ENCODE measurements at regions of chr2 and their contacts with region 1.

Region 1: GRCh38 chr2:7467782-7468447 is 550.7 kb downstream of the RNF144A start:
- DNase-seq: peak; percentile 69
- ATAC-seq: peak; percentile 96
- H3K4me3 Mint-ChIP-seq: peak overlapping the region; percentile 15
- H3K27ac Mint-ChIP-seq: peak overlapping the region; percentile 84
- H3K4me1 Mint-ChIP-seq: peaks cover 45% of the 10 kb centered on the region
- H3K27me3 Mint-ChIP-seq: peaks cover 2% of the 10 kb centered on the region

Region 2: GRCh38 chr2:7348761-7349160 is 119.2 kb before region 1 on chr2:
- CTCF ChIA-PET with region 1: no interaction called
- POLR2A ChIA-PET with region 1: no interaction called
- intact Hi-C with region 1: no loop called
- DNase-seq: no peak
- ATAC-seq: no peak
- H3K4me3 Mint-ChIP-seq: no peak overlapping the region
- H3K27ac Mint-ChIP-seq: no peak overlapping the region
- H3K4me1 Mint-ChIP-seq: no peaks in the 10 kb centered on the region
- H3K27me3 Mint-ChIP-seq: no peaks in the 10 kb centered on the region

Region 3: DNA sequence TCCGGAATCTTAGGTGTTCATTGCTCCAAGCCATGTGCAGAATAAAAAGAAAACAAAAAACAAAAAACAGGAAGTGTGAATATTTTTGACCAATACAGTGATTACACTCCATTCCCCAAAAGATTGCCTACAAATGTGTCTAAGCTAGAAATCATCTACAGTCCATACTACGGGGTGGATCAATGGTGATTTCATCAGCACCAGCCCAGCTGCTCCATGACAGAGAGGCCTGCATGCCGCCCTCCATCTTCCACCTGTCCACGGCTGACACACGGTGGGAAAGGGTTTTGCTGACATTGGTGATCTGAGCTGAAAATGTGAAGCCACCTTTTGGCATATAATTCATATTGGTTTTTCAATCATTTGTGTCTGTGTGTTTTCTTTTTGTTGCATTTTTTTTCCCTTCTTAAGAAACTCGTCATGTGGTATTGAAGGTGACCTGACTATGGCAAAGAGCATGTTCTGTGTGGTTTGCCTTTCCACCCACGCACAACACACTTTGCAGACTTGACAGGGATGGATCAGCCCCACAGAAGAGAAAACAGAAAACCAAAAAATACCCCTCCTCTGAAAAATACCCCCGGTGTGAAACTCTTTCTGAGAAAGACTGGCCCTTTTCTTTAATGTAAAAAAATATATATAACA is 17.6 kb before region 1 on chr2:
- CTCF ChIA-PET with region 1: interaction called, 3 read pairs
- POLR2A ChIA-PET with region 1: interaction called, 3 read pairs
- intact Hi-C with region 1: loop called (anchors 1 to 2 kb)
- DNase-seq: peak; percentile 83
- ATAC-seq: peak; percentile 84
- H3K4me3 Mint-ChIP-seq: peak overlapping the region; percentile 36
- H3K27ac Mint-ChIP-seq: peak overlapping the region; percentile 89
- H3K4me1 Mint-ChIP-seq: peaks cover 74% of the 10 kb centered on the region
- H3K27me3 Mint-ChIP-seq: no peaks in the 10 kb centered on the region

Region 4: GRCh38 chr2:7517088-7517487 is 49.2 kb after region 1 on chr2:
- CTCF ChIA-PET with region 1: no interaction called
- POLR2A ChIA-PET with region 1: no interaction called
- intact Hi-C with region 1: loop called in 1 of 2 experiments (anchors 5 kb)
- DNase-seq: peak; percentile 48
- ATAC-seq: peak; percentile 88
- H3K4me3 Mint-ChIP-seq: peak overlapping the region; percentile 18
- H3K27ac Mint-ChIP-seq: peak overlapping the region; percentile 89
- H3K4me1 Mint-ChIP-seq: peaks cover 38% of the 10 kb centered on the region
- H3K27me3 Mint-ChIP-seq: no peaks in the 10 kb centered on the region

Region 5: DNA sequence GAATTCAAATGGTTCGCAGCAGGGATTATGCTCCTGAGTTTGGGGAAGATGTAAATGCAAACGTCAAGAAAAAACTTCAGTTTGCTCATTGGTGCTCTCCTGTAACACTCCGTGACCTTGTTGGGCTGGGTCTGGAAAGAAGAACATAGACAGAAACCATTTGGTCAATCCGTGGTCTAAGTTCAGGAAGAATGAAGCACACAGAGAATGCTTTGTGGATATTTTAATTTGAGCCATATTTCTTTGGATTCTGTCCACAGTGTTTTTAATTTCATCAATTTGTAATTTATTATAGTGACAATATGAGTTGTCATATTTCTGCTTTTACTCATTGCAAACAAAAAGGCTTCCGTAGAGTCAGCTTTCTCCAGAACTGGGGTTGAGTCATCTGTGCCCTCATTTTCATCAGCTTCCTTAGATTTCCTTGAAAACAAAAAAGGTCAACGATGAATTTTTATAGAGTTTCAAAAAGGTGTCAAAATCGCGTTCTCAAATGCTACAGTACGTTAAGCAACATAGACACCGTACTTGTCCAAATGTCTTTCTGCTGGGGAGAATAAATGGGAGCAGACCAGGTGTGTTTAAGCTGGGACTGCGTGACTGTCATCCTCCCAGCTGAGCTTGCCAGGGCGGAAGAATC is 55.7 kb after region 1 on chr2:
- CTCF ChIA-PET with region 1: no interaction called
- POLR2A ChIA-PET with region 1: no interaction called
- intact Hi-C with region 1: loop called (anchors 2 to 5 kb)
- DNase-seq: peak; percentile 27
- ATAC-seq: peak; percentile 51
- H3K4me3 Mint-ChIP-seq: peak overlapping the region; percentile 46
- H3K27ac Mint-ChIP-seq: peak overlapping the region; percentile 92
- H3K4me1 Mint-ChIP-seq: peaks cover 57% of the 10 kb centered on the region
- H3K27me3 Mint-ChIP-seq: no peaks in the 10 kb centered on the region

Region 6: GRCh38 chr2:7539760-7540159 is 71.8 kb after region 1 on chr2:
- CTCF ChIA-PET with region 1: no interaction called
- POLR2A ChIA-PET with region 1: no interaction called
- intact Hi-C with region 1: no loop called
- DNase-seq: no peak
- ATAC-seq: peak; percentile 39
- H3K4me3 Mint-ChIP-seq: no peak overlapping the region
- H3K27ac Mint-ChIP-seq: peak overlapping the region; percentile 55
- H3K4me1 Mint-ChIP-seq: peaks cover 49% of the 10 kb centered on the region
- H3K27me3 Mint-ChIP-seq: no peaks in the 10 kb centered on the region